ENCODE measurements at regions of chr12 and their contacts with region 1.

Region 1: DNA sequence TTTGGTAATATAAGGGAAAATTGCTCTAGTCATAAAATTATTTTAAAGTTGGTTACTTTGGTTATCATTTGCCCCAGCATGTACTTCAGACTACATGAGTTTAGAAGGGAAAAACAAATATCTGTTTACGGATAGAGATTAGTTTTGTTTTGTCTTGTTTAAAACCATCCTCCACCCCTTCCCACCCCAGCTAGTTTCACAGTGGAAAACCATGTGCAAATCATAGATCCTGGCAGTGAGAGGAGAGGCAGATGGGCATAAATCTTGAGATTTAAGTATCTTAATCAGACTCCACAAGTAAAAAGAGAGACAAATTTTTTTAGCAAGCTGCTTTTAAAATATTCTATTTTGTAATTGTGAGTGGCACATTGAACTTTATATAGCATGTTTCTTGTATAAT is 424.7 kb downstream of the TMEM117 start:
- DNase-seq: no peak
- H3K4me3 ChIP-seq: no peak overlapping the region
- H3K27ac ChIP-seq: no peak overlapping the region
- H3K4me1 ChIP-seq: no peaks in the 10 kb centered on the region
- H3K27me3 ChIP-seq: no peaks in the 10 kb centered on the region
- CTCF ChIP-seq: no peak

Region 2: DNA sequence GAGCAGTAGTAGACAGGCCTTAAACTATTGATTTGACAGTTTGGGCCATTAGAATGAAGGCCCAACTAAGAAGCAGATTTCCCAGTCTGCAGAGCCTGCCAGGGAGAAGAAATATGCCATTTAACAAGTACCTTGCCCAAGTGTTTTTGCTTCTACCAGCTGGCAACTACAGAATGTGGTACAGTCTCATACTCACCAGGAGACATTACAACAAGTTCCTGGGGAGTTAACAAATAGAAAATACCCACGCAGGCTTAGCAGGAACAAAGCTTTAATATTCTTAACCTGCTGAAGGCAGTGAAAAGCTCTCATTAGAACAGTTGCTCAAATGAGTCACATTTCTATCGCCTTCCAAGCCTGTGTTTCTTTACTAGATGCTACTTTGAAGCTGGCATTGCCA is 183.7 kb before region 1 on chr12:
- CTCF ChIA-PET with region 1: interaction called, 13 read pairs
- POLR2A ChIA-PET with region 1: no interaction called
- intact Hi-C with region 1: no loop called
- DNase-seq: peak; percentile 43
- H3K4me3 ChIP-seq: no peak overlapping the region
- H3K27ac ChIP-seq: no peak overlapping the region
- H3K4me1 ChIP-seq: peaks cover 3% of the 10 kb centered on the region
- H3K27me3 ChIP-seq: no peaks in the 10 kb centered on the region
- CTCF ChIP-seq: no peak